RWPE1 (cell line): ENCODE measurements at regions of chr14 and their contacts with region 1.

Region 1: DNA sequence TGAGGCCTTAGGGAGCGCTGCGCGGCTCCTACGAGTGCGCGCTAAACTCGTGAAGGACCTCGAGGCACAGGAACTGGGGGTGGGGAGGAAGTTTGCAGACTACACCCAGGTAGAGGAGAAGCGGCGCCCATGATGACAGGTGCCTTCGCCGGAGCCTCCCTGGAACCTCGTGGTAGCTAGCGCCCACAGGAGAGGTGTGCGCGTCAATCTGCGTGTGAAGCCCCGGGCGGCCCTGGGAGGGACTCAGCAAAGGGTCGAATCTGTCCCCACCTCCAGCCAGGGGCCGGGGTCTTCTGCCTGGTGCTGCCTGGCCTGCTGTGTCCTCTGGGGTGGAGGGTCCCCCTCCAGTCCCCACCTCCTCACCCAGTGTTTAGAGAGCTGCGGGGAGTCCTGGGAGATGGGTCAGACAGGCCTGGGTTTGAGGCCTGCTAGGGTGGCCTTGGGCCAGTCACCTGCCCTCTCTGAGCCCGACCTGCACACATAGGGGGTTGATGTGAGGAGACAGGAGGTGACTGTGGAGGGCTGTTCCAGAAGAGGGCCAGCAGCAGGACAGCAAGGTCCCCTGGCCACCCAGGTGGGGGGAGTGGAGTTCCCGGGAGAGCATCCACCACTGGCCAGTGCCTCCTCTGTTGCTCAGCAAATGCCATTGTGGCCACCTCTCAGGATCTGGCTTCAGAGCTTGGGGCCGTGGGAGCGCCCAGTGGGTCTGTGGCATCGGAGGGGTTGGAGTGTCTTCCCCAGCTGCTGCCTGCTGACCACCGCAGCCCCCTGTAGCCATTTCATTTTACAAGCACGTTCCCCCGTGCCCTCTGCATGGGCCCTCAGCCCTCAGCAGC is 20.2 kb upstream of the KIF26A start:
- DNase-seq: no peak
- H3K27ac ChIP-seq: no peak overlapping the region
- CTCF ChIP-seq: no peak

Region 2: GRCh38 chr14:104094709-104095438 is 23.4 kb before region 1 on chr14:
- CTCF ChIA-PET with region 1: interaction called, 12 read pairs
- POLR2A ChIA-PET with region 1: interaction called, 3 read pairs
- DNase-seq: peak; percentile 73
- H3K27ac ChIP-seq: no peak overlapping the region
- CTCF ChIP-seq: peak; percentile 92